K562 (cell line): ENCODE measurements at regions of chr18 and their contacts with region 1.

Region 1: GRCh38 chr18:3012964-3013804 is at the start of gene LPIN2:
- DNase-seq: peak; percentile 97 to 99 (median 98)
- ATAC-seq: peak; percentile 89
- H3K4me3 ChIP-seq: peak within 1 kb of the TSS; percentile 85
- H3K27ac ChIP-seq: peak within 1 kb of the TSS; percentile 93
- H3K4me1 ChIP-seq: peaks cover 25 to 28% of the 10 kb centered on the region in 2 experiments
- H3K27me3 ChIP-seq: no peaks in the 10 kb centered on the region
- CTCF ChIP-seq: no peak
- EP300 ChIP-seq: no peak
- POLR2A ChIP-seq: no peak
- RAD21 ChIP-seq: no peak
- polyA plus RNA-seq, gene LPIN2: 5.2 to 7.6 TPM

Region 2: DNA sequence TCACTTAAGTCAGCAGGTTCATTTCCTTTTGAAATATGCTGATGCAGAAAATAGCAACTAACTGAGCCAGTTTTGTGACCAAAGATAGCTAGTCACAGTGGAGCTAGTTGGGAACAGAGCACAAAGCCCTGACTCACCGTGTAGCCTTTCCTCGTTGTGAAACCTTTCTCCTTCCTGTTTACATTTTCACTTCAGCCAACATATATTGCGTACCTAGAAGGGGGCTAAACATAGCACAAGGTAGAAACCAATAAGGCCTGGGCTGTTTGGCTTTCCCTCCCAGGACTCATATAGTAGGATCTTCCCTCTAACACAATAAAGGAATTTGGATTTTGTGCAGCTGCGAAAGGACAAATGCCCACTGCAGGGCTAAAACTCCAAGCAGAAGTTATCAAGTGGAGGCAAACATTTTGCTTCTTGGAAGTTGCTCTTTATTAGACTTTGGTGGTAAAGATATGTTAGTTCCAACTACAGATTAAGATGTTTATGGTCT is 24.3 kb after region 1 on chr18:
- CTCF ChIA-PET with region 1: no interaction called
- POLR2A ChIA-PET with region 1: interaction called, 7 read pairs
- in situ Hi-C with region 1: no loop called
- intact Hi-C with region 1: loop called (anchors 1 kb)
- DNase-seq: peak; percentile 40 to 82 (median 59)
- ATAC-seq: peak; percentile 85
- H3K4me3 ChIP-seq: peak overlapping the region; percentile 37
- H3K27ac ChIP-seq: peak overlapping the region; percentile 88
- H3K4me1 ChIP-seq: peaks cover 10 to 22% of the 10 kb centered on the region in 2 experiments; a peak in 4 of 5 replicates
- H3K27me3 ChIP-seq: no peaks in the 10 kb centered on the region
- CTCF ChIP-seq: no peak
- EP300 ChIP-seq: peak; percentile 41
- POLR2A ChIP-seq: no peak; the same call in none of the 2 replicates
- RAD21 ChIP-seq: no peak

Region 3: GRCh38 chr18:3062798-3063680 is 49.9 kb after region 1 on chr18:
- CTCF ChIA-PET with region 1: interaction called, 4 read pairs
- POLR2A ChIA-PET with region 1: interaction called, 3 read pairs
- in situ Hi-C with region 1: no loop called
- intact Hi-C with region 1: loop called (anchors 2 kb)
- DNase-seq: peak; percentile 34 to 80 (median 56)
- ATAC-seq: peak; percentile 94
- H3K4me3 ChIP-seq: no peak overlapping the region
- H3K27ac ChIP-seq: no peak overlapping the region
- H3K4me1 ChIP-seq: peaks cover 4 to 5% of the 10 kb centered on the region in 2 experiments; a peak in 4 of 5 replicates
- H3K27me3 ChIP-seq: no peaks in the 10 kb centered on the region
- CTCF ChIP-seq: peak; percentile 83 to 93 (median 86)
- EP300 ChIP-seq: no peak
- POLR2A ChIP-seq: no peak
- RAD21 ChIP-seq: peak; percentile 74 to 90

Region 4: GRCh38 chr18:3135536-3135935 is 122.4 kb after region 1 on chr18:
- CTCF ChIA-PET with region 1: no interaction called
- POLR2A ChIA-PET with region 1: no interaction called
- in situ Hi-C with region 1: no loop called
- intact Hi-C with region 1: no loop called
- DNase-seq: no peak
- ATAC-seq: no peak
- H3K4me3 ChIP-seq: no peak overlapping the region
- H3K27ac ChIP-seq: no peak overlapping the region
- H3K4me1 ChIP-seq: peaks cover 0 to 7% of the 10 kb centered on the region in 2 experiments; a peak in 2 of 5 replicates
- H3K27me3 ChIP-seq: no peaks in the 10 kb centered on the region
- CTCF ChIP-seq: no peak
- EP300 ChIP-seq: no peak
- POLR2A ChIP-seq: no peak
- RAD21 ChIP-seq: no peak

Region 5: GRCh38 chr18:3151399-3152264 is 138.4 kb after region 1 on chr18:
- CTCF ChIA-PET with region 1: no interaction called
- POLR2A ChIA-PET with region 1: interaction called, 4 read pairs
- in situ Hi-C with region 1: no loop called
- intact Hi-C with region 1: loop called (anchors 5 kb)
- DNase-seq: peak; percentile 52 to 65 (median 62)
- ATAC-seq: peak; percentile 36; the same call in 1 of the 3 replicates
- H3K4me3 ChIP-seq: no peak overlapping the region
- H3K27ac ChIP-seq: no peak overlapping the region
- H3K4me1 ChIP-seq: peaks cover 4 to 5% of the 10 kb centered on the region in 2 experiments; a peak in 2 of 5 replicates
- H3K27me3 ChIP-seq: no peaks in the 10 kb centered on the region
- CTCF ChIP-seq: peak; percentile 70 to 87 (median 70); a peak in 5 of 6 replicates
- EP300 ChIP-seq: no peak
- POLR2A ChIP-seq: no peak
- RAD21 ChIP-seq: peak; percentile 64 to 82